AG04449 (cell line): ENCODE measurements at regions of chr14 and their contacts with region 1.

Region 1: DNA sequence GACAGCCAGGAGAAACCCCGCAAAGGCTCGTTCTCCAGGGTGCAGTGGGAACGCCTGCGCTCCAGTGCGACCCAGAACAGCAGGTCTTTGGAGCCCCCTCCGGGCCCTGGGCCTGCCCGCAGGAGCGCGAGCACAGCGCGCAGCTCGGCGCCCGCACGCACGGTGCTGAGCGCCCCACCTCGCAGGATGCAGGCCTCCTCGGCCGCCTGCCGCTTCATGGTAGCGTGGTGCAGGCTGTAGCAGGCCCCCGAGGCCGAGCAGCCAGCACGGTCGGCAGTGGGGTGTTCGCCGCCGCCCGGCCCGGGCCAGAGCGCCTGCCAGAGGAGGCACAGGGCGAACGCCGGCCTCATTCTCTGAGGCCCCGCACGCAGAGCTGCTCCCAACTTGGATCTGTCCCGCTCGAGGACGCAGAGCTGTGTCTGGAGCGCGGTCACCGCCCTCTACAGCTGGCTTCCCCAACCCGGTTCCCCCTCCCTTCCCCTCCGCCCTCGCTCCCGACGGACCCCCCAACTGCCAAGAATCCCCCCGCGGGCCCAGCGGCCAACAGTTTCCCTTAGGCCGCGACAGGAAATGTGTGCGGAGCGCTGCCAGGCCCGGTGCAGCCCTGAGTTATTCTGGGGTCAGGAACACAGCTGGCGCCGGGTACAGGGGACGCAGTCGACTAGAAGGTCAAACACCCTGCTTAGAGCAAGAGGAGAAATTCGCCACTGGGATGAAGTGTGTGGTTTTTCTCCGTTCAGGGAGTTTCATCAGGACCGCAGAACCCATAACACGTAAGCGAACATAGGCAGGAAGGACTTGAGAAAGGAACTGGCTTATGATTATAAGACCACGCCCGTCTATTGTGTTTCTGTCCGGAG is at the start of gene CLEC14A:
- DNase-seq: no peak
- H3K4me3 ChIP-seq: peak within 1 kb of the TSS; percentile 62
- CTCF ChIP-seq: no peak

Region 2: GRCh38 chr14:38405851-38406635 is 150.1 kb after region 1 on chr14:
- CTCF ChIA-PET with region 1: interaction called, 3 read pairs
- POLR2A ChIA-PET with region 1: interaction called, 16 read pairs
- DNase-seq: peak; percentile 87
- H3K4me3 ChIP-seq: no peak overlapping the region
- CTCF ChIP-seq: peak; percentile 23